Activated CD4-positive, alpha-beta memory T cell treated with anti-CD3 and anti-CD28 coated beads for 36 hours (primary cell): ENCODE measurements at regions of chr2 and their contacts with region 1.

Region 1: GRCh38 chr2:170715062-170715931 is at the start of gene SP5:
- DNase-seq: peak; percentile 40
- H3K4me3 Mint-ChIP-seq: peak within 1 kb of the TSS; percentile 69
- H3K27ac Mint-ChIP-seq: no peak within 1 kb of the TSS
- H3K4me1 Mint-ChIP-seq: peaks cover 37% of the 10 kb centered on the region
- H3K27me3 Mint-ChIP-seq: peaks cover 68% of the 10 kb centered on the region
- total RNA-seq, gene SP5: not detected

Region 2: DNA sequence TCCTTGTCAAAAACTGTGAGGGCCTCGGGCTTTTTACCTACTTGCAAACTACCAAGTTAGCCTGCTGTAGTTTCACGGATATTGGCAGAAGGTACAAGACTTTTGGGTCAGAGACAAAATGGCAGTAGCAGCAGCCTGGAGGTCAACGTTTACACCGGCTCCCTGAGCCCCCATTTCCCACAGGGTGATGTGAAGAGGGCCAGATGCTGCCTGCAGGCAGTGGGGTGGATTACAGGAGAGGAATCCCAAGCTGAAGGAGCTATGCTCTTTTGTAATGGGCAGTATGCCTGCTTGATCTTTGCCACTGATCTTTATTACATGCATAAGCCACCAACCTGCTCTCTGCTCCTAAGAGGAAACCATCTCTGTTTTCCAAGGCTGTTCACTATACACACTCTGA is 29.7 kb before region 1 on chr2:
- CTCF ChIA-PET with region 1: no interaction called
- POLR2A ChIA-PET with region 1: no interaction called
- intact Hi-C with region 1: no loop called
- DNase-seq: no peak
- H3K4me3 Mint-ChIP-seq: no peak overlapping the region
- H3K27ac Mint-ChIP-seq: no peak overlapping the region
- H3K4me1 Mint-ChIP-seq: no peaks in the 10 kb centered on the region
- H3K27me3 Mint-ChIP-seq: peaks cover 6% of the 10 kb centered on the region

Region 3: DNA sequence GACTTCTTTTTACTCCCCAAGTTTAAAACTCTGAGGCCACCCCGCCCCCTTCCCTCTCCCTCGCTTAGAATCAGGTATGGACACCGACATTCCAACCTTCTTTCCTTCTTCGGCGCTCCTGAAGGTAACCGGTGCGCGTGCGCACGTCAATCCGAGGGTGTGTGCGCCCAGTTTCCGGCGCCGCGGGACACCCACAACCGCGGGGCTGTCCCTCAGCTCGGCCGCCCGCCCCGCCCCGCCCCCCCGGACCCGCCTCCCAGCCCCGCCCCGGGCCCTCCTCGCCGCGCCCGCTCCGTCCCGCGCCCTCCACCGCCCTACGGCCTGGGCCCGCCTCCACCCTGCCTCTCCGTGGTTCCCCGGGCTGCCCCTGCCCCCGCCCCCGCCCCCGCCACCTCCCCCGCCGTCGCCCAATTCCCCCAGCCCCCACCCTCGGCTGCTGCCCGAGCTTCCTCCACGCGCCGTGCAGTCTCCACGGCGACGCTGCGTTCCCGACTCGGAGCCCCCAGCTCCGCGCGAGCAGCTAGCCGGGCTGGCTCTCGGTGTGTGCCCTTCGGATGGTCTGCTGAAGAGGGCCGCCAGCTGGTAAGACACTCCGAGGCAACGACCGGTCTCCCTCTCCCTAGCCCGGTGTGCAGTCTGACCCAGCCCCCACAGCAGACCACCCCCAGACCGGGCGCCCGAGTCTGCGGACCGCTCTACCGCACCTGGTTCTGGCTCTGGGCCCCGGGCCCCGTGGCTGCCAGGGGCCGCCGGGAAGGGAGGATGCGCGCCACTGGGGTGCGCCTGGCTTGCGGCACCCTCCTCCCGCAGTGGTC is 55.5 kb after region 1 on chr2:
- CTCF ChIA-PET with region 1: no interaction called
- POLR2A ChIA-PET with region 1: no interaction called
- intact Hi-C with region 1: loop called (anchors 5 kb)
- DNase-seq: peak; percentile 75
- H3K4me3 Mint-ChIP-seq: peak overlapping the region; percentile 77
- H3K27ac Mint-ChIP-seq: no peak overlapping the region
- H3K4me1 Mint-ChIP-seq: peaks cover 7% of the 10 kb centered on the region
- H3K27me3 Mint-ChIP-seq: peaks cover 14% of the 10 kb centered on the region

Region 4: DNA sequence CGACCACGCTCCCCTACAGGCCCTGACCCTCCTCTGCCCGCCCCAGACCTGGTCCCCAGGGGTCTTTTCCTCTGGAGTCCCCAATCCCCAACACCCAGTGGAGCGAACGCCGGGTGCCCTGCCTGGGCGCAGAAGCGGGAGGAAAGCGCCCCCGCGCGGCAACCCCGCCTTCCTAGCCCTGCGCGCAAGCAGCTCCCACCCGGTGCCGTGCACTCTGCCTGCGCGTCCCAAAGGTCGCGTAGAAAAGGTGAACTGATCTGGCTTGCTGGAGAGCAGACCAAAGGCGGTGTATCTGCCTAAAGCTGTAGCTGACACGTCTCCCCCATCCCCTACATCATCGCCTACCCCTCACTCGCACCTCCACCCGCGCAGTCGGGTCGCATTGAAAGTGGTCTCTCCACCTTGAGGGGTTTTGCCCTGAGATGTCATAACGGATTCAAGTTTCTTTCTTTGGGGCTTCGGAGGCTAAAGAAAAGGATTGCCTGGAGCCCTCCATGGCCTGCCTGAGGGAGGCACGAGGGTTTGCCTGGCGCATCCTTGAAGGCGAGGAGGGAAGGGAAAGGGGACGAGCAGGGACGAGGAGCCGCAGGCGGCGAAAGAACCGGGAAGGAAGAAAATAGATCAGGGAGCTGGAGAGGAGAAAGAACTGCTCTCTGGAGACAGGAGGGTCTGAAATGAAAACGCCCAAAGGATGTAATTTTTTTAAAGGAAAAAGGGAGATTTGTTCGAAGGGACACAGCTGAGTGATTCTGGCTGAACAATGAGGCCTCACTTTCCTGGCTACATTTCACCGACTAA is 107.2 kb after region 1 on chr2:
- CTCF ChIA-PET with region 1: interaction called, 12 read pairs
- POLR2A ChIA-PET with region 1: no interaction called
- intact Hi-C with region 1: no loop called
- DNase-seq: peak; percentile 62
- H3K4me3 Mint-ChIP-seq: peak overlapping the region; percentile 4
- H3K27ac Mint-ChIP-seq: no peak overlapping the region
- H3K4me1 Mint-ChIP-seq: peaks cover 42% of the 10 kb centered on the region
- H3K27me3 Mint-ChIP-seq: peaks cover 69% of the 10 kb centered on the region